GM18951 (cell line): ENCODE measurements at regions of chr12 and their contacts with region 1.

Region 1: DNA sequence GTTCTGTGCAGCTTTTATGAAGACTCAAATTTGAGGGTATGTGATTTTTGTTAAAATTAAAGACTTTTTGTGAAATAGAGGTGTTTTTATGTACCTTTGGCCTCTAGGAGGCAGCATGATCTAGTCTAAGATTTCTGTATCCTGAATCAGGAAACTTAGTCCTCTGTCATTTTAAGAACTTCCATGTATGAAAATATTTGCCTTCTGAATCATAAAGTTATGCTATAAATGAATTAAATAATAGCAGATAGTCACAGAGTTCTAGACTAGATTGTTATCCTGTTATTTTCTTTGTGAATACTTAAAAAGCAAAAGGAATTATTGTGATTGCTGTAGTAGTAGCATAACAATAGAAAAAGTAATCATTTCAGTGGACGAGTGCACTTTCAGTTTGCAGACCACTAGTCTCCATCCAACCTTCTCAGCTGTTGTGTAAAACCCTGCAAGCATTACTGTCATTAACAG is 56.3 kb downstream of the FGD4 start:
- POLR2A ChIP-seq: no peak

Region 2: DNA sequence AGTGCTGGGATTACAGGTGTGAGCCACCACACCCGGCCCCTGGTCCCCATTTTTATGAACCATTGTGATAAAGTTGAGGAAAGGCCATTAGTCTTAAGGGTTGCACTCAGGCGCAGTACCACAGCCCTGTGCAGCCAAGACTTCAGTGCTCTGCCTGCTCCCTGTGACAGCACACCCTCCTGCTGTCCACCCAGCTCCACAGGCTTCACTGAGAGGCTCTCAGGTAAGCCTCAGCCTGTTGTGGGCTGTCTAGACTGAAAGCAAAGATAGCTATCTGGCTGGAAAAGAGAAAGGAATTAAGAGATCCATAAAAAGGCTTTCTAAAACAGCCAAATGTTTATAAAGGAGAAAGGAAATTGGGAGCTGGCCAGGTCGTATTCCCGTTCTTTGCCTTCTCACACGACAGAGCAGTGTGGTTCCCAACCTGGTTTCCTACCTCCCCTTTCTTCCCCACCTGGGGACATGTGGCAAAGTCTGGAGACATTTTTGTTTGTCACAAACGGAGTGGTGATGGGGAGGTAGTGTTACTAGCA is 204.3 kb after region 1 on chr12:
- in situ Hi-C with region 1: loop called (anchors 10 kb)
- POLR2A ChIP-seq: no peak

Region 3: GRCh38 chr12:32755654-32756475 is 300.2 kb after region 1 on chr12 and contains the start of gene YARS2:
- in situ Hi-C with region 1: loop called (anchors 10 kb)
- POLR2A ChIP-seq: peak; percentile 88

Region 4: GRCh38 chr12:32780071-32780470 is 324.4 kb after region 1 on chr12:
- in situ Hi-C with region 1: no loop called
- POLR2A ChIP-seq: no peak

Region 5: GRCh38 chr12:33111850-33112249 is 656.2 kb after region 1 on chr12:
- in situ Hi-C with region 1: no loop called
- POLR2A ChIP-seq: no peak